ENCODE measurements at regions of chr14 and their contacts with region 1.

Region 1: DNA sequence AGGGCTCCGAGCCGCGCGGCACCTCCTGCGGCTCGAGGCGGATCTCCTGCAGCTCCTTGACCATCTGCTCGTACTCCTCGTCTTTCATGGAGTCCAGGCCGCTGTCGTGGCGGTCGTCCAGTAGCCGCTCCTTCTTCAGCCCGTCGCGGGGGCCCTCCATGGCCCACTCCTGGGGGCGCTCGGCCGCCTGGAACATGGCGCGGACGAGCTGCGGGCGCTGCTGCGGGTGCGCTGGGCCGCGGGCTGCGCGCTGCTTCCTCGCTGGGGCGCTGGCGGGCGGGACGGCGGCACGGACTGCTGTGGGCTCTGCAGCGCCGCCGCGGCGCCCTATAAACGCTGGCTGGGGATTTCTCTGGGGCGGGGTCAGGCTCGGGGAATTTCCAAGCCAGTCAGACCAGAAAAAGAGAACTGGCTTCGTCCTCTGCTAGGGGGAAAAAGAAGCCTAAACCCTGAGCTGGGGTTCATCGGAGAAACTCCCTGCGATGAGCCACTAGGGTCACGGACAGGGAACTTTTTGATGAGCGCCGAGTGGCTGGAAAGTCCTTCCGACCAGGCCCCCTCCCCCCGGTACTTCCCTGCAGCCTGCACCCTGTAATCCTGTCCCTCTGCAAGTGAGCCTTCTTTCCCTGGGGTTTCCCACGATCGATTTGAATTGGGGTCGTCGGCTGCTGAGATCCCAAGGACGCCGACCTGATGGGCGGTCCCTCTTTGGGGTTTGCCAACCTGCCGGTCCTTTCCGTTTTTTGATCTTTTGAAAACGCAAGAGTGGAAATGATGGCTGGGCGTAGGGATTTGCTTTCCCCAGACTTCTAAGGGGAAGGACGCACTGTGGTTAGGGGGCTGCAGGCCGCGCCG is at the start of gene NFKBIA:
- DNase-seq: peak; percentile 72 to 86
- H3K4me3 ChIP-seq: peak within 1 kb of the TSS; percentile 85
- H3K27ac ChIP-seq: peak within 1 kb of the TSS; percentile 89
- H3K4me1 ChIP-seq: peaks cover 54% of the 10 kb centered on the region
- H3K27me3 ChIP-seq: no peaks in the 10 kb centered on the region
- CTCF ChIP-seq: no peak
- total RNA-seq, gene NFKBIA: 30.2 and 34.8 TPM in 2 replicates

Region 2: GRCh38 chr14:34568803-34569202 is 835.9 kb before region 1 on chr14:
- CTCF ChIA-PET with region 1: no interaction called
- POLR2A ChIA-PET with region 1: no interaction called
- intact Hi-C with region 1: no loop called
- DNase-seq: no peak
- H3K4me3 ChIP-seq: no peak overlapping the region
- H3K27ac ChIP-seq: no peak overlapping the region
- H3K4me1 ChIP-seq: no peaks in the 10 kb centered on the region
- H3K27me3 ChIP-seq: no peaks in the 10 kb centered on the region
- CTCF ChIP-seq: no peak

Region 3: DNA sequence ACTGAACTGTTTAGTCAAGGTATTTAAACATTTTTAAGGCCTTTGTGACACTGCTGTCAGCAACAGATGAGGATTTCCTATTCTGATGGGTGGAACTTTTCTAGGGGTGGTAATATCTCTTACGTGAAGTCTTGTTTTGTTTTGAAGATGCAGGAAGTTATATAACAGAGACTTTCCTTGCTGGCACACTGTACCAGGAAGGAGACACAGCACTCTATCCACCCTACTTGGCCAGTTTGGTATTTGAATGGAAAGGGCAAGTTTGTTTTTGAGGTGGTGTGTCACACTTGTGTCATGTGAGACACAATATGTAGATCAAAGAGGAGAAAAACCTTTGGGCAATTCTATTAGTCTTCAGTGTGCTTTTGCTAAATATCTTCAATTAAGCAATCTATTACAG is 473.5 kb before region 1 on chr14:
- CTCF ChIA-PET with region 1: no interaction called
- POLR2A ChIA-PET with region 1: no interaction called
- intact Hi-C with region 1: no loop called
- DNase-seq: peak; percentile 3 to 72
- H3K4me3 ChIP-seq: no peak overlapping the region
- H3K27ac ChIP-seq: peak overlapping the region; percentile 20; the same call in 1 of the 2 replicates
- H3K4me1 ChIP-seq: peaks cover 10% of the 10 kb centered on the region
- H3K27me3 ChIP-seq: no peaks in the 10 kb centered on the region
- CTCF ChIP-seq: no peak

Region 4: DNA sequence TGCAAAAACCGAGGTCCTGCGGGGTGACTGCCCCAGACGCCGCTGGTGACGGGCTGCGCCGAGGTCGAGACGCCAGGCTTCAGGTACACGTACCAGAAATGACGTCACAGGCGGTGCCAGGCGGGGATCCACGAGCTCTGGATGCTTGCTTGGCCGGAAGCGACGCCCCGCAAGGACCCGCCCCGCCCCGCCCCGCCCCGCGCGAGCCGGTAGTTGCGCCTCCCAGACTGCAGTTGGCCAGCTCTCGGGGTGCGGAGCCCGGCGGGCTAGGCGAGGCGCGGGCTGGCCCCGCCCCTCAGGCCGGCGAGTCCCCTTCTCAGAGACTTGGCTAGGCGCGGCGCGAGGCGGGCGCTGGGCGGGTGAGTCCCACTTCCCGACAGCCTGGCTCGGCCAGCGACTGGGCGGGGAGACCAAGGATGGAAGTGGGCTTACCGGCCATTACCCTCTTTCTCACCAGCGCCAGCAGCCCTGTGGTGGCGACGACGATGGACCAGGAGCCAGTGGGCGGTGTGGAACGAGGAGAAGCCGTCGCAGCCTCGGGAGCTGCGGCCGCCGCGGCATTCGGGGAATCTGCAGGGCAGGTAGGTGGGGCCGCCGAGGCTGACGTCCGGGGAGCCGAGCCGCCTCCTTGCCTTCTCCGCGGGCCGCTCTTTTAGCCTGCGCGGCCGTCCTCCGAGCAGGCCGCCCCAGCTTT is 358.5 kb before region 1 on chr14 and contains the start of gene FAM177A1:
- CTCF ChIA-PET with region 1: no interaction called
- POLR2A ChIA-PET with region 1: no interaction called
- intact Hi-C with region 1: loop called (anchors 5 kb)
- DNase-seq: peak; percentile 87 to 95
- H3K4me3 ChIP-seq: peak within 1 kb of the TSS; percentile 87
- H3K27ac ChIP-seq: peak within 1 kb of the TSS; percentile 76
- H3K4me1 ChIP-seq: peaks cover 23% of the 10 kb centered on the region
- H3K27me3 ChIP-seq: no peaks in the 10 kb centered on the region
- CTCF ChIP-seq: no peak
- total RNA-seq, gene FAM177A1: 31.6 and 34.4 TPM in 2 replicates

Region 5: DNA sequence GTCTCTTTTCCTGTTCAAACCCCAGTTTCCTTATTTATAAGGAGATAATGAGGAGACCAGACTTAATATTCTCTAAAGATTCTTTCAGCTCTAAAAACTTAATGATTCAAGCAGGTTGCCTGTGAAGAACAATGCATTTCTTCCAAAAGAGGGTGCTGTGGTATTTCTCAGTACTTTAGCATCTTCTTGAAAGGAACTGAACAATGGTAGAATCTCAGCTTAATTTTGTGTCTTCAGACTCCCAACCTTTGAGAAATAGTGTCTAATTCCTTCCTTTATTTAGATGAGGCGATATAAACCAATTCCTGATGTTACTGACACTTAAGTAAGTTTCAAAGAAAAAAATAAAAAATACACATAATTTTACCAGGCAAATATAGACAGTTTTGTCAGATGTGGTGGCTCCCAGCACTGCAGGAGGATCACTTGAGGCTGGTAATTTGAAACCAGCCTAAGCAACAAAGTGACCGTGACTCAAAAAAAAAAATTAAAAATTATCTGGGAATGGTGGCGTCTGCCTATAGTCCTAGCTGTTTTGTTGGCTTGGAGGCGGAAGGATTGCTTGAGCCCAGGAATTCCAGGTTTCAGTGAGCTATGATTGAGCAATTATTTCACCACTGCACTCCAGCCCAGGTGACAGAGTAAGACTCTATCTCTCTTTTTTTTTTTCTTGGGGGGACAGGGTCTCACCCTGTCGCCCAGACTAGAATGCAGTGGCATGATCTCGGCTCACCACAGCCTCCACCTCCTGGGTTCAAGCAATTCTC is 189.4 kb before region 1 on chr14:
- CTCF ChIA-PET with region 1: no interaction called
- POLR2A ChIA-PET with region 1: no interaction called
- intact Hi-C with region 1: loop called (anchors 1 kb)
- DNase-seq: no peak
- H3K4me3 ChIP-seq: no peak overlapping the region
- H3K27ac ChIP-seq: no peak overlapping the region
- H3K4me1 ChIP-seq: peaks cover 10% of the 10 kb centered on the region
- H3K27me3 ChIP-seq: no peaks in the 10 kb centered on the region
- CTCF ChIP-seq: peak; percentile 49; the same call in 1 of the 2 replicates

Region 6: GRCh38 chr14:35292051-35292769 is 112.5 kb before region 1 on chr14 and contains the start of gene PSMA6:
- CTCF ChIA-PET with region 1: interaction called, 4 read pairs
- POLR2A ChIA-PET with region 1: interaction called, 3 read pairs
- intact Hi-C with region 1: loop called (anchors 1 kb)
- DNase-seq: peak; percentile 94 to 95
- H3K4me3 ChIP-seq: peak within 1 kb of the TSS; percentile 94
- H3K27ac ChIP-seq: peak within 1 kb of the TSS; percentile 67
- H3K4me1 ChIP-seq: peaks cover 21% of the 10 kb centered on the region
- H3K27me3 ChIP-seq: no peaks in the 10 kb centered on the region
- CTCF ChIP-seq: no peak
- total RNA-seq, gene PSMA6: 118 and 188 TPM in 2 replicates

Region 7: GRCh38 chr14:35355981-35356841 is 48.5 kb before region 1 on chr14:
- CTCF ChIA-PET with region 1: no interaction called
- POLR2A ChIA-PET with region 1: no interaction called
- intact Hi-C with region 1: loop called (anchors 1 kb)
- DNase-seq: peak; percentile 76 to 89
- H3K4me3 ChIP-seq: peak overlapping the region; percentile 30; the same call in 1 of the 2 replicates
- H3K27ac ChIP-seq: peak overlapping the region; percentile 86
- H3K4me1 ChIP-seq: peaks cover 51% of the 10 kb centered on the region
- H3K27me3 ChIP-seq: no peaks in the 10 kb centered on the region
- CTCF ChIP-seq: no peak

Region 8: GRCh38 chr14:35558680-35559079 is 154.0 kb after region 1 on chr14:
- CTCF ChIA-PET with region 1: no interaction called
- POLR2A ChIA-PET with region 1: no interaction called
- intact Hi-C with region 1: no loop called
- DNase-seq: no peak
- H3K4me3 ChIP-seq: no peak overlapping the region
- H3K27ac ChIP-seq: no peak overlapping the region
- H3K4me1 ChIP-seq: no peaks in the 10 kb centered on the region
- H3K27me3 ChIP-seq: no peaks in the 10 kb centered on the region
- CTCF ChIP-seq: no peak

Region 9: GRCh38 chr14:35909665-35910064 is 505.0 kb after region 1 on chr14:
- CTCF ChIA-PET with region 1: no interaction called
- POLR2A ChIA-PET with region 1: no interaction called
- intact Hi-C with region 1: no loop called
- DNase-seq: no peak
- H3K4me3 ChIP-seq: no peak overlapping the region
- H3K27ac ChIP-seq: no peak overlapping the region
- H3K4me1 ChIP-seq: no peaks in the 10 kb centered on the region
- H3K27me3 ChIP-seq: no peaks in the 10 kb centered on the region
- CTCF ChIP-seq: no peak

Measured in PC-9 (cell line).